ENCODE measurements at regions of chr2 and their contacts with region 1.

Region 1: GRCh38 chr2:231709981-231710798 is 1.9 kb downstream of the PTMA start:
- DNase-seq: peak; percentile 68 to 91
- H3K4me3 ChIP-seq: peak overlapping the region; percentile 83 to 94
- H3K27ac ChIP-seq: peak overlapping the region; percentile 99 to 100
- H3K4me1 ChIP-seq: peaks cover 0 to 13% of the 10 kb centered on the region in 2 donors
- H3K27me3 ChIP-seq: no peaks in the 10 kb centered on the region
- CTCF ChIP-seq: peak; percentile 35 to 100 (median 96)
- POLR2A ChIP-seq: peak; percentile 71 to 81

Region 2: DNA sequence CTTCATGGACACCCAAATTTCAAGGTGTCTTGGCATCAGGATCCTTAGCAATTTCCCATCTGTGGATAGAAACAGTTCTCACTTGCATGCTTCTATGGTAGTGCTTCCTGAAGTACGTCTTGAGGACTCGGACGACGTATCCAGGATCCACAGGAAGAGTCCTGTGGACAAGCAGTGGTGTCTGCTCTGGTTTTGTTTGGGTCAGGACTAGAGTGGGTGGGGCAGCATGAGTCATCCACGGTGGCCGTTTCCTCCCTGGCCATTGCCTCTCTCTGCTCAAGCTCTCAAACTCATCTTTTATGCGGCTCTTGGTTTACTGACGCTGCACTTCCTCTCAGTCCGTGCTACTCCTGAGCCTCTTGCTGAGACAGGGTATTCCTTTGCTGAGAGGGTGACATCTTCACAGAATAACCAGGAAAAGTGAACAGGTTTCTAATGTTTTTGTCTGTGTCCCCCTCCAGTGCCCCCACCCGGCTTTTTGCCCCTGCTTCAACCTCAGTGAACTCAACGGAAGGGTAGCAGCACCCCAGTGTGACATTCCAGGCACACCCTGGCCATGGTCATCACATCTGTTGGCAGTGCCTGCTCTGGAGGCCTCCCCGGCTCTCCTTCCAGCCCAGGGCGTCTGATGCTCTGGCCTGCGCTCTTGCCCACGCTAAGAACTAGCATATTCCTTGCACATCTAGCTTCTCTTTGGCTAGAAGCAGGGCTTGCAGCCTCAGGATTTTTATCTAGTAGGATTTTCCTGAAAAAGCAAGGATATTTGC is 449.6 kb before region 1 on chr2:
- intact Hi-C with region 1: no loop called
- DNase-seq: no peak
- H3K4me3 ChIP-seq: no peak overlapping the region
- H3K27ac ChIP-seq: no peak overlapping the region
- H3K4me1 ChIP-seq: no peaks in the 10 kb centered on the region
- H3K27me3 ChIP-seq: no peaks in the 10 kb centered on the region
- CTCF ChIP-seq: no peak
- POLR2A ChIP-seq: no peak

Region 3: DNA sequence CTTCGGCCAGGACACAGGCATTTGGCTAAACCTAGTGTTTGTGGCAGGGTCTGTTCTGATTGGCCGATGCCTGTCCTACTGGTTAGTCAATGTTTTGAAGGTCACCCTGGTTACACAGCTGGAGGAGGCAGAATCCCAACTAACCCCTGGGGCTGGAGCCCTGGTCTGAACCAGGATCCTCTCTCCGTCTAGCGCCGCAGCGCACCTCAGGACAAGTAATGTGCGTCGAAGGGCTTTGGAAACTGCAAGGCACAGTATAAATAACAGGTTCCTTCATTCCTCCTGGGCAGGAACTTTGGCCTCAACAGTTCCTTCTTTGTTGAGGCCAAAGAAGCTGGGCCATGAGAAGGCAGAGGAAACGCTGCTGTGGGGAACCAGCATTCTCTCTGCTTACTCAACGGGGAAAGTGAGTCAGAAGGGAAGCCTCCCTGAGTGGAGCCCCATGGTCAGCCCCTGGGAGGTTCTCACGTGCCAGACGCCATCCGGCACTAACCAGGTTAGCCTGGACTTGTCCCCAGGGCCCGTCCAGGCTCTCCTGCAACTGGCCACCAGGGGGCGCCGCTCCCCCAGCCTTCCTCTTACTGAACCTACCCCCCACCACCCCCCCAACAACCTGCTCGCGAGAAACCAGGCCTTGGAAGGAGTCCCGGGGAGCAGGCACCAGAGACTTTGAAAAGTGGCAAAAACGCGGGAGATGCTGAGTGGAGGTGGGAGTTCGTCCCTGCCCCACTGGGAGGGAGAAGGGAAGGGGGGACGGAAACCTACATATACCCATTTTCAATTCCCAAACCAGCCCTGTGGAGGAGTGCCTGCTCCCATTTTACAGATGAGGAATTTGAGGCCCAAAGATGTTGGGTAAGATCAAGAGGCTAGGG is 97.8 kb before region 1 on chr2:
- intact Hi-C with region 1: loop called (anchors 2 kb)
- DNase-seq: peak; percentile 95 to 96
- H3K4me3 ChIP-seq: no peak overlapping the region
- H3K27ac ChIP-seq: peak overlapping the region; percentile 99 to 100
- H3K4me1 ChIP-seq: peaks cover 8 to 21% of the 10 kb centered on the region in 2 donors
- H3K27me3 ChIP-seq: no peaks in the 10 kb centered on the region
- CTCF ChIP-seq: peak; percentile 93 to 99 (median 98)
- POLR2A ChIP-seq: peak in 1 of 2 donors; percentile 34

Region 4: DNA sequence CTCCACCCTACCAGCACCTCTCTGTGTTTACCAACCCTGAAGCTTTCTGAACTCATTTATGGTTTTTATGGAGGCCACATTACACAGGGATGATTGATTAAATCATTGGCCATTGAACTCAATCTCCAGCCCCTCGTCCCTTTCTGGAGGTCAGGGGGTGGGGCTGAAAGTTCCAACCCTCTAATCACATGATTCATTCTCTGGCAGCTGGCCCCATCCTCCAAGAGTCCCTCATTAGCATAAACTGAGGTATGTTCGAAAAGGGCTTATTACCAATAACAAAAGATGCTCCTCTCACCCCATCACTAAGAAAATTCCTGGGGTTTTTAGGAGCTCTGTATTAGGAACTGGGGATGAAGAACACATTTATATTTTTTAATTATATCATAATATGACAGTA is 343.6 kb after region 1 on chr2:
- intact Hi-C with region 1: no loop called
- DNase-seq: no peak
- H3K4me3 ChIP-seq: no peak overlapping the region
- H3K27ac ChIP-seq: no peak overlapping the region
- H3K4me1 ChIP-seq: no peaks in the 10 kb centered on the region
- H3K27me3 ChIP-seq: no peaks in the 10 kb centered on the region
- CTCF ChIP-seq: no peak
- POLR2A ChIP-seq: no peak